Right ventricle myocardium superior (tissue), 1 donor: ENCODE measurements at regions of chr10 and their contacts with region 1.

Region 1: DNA sequence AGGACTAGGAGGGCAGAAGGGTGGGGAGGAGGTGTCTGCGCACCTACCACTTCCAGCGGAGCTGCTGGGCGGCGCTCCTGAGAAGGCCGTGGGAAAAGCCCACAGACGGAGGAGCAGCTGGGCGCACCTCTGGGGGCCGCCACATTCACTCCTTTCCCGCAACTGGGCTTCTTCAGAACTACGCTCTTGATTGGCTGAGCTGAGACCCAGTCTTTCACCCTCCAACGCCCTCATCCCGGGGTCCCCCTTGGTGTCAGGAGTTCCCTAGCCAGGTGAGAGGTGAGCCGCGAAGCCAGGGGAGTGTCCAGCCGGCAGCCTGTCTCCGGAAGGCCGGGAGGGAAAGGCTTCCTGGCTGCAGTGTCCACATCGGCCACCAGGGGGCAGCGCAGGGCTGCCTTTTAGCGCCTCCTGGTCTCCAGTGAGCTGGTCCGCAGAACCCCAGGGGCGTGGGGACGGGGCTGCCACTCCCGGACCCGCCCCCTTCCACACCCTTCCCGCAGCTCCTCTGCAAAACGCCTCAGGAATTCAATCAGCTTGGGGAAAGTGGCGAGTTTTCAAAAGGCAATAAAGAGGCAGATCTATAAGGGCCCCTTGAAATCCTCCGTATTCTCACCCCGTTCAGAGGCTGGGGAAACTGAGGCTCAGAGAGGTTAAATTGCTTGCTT is 98.8 kb downstream of the CHST15 start:
- DNase-seq: peak; percentile 92
- ATAC-seq: peak; percentile 93

Region 2: DNA sequence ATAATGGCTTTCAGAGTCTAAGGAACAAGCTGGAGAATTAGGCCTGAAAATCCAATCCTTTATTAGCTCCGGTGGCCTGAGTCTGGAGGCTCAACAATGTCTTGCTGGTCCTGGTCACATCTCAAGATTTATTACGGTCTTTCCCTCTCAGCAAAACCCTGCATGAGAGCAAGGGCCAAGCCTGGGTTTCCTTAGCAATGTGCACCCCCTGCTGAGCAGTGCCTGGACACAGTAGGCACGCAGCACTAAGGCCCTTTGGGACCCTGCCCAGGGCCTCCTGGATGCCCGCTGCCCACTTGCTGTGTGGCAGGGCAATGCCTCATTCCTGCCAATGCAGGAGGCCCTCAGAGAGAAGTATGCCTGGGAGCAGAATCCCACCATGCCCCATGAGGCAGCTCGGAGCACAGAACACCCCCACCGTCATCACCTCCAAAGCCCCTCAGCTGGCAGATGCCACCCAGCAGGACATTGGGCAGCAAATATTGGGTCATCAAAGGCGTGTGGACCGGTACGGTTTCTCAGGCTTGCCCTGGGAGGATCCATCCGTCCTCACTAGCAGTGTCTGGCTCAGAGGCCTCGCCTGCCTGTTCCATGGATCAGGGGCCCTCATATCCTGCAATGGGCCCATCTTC is 267.8 kb after region 1 on chr10:
- intact Hi-C with region 1: loop called (anchors 5 kb)
- DNase-seq: no peak
- ATAC-seq: peak; percentile 34

Region 3: DNA sequence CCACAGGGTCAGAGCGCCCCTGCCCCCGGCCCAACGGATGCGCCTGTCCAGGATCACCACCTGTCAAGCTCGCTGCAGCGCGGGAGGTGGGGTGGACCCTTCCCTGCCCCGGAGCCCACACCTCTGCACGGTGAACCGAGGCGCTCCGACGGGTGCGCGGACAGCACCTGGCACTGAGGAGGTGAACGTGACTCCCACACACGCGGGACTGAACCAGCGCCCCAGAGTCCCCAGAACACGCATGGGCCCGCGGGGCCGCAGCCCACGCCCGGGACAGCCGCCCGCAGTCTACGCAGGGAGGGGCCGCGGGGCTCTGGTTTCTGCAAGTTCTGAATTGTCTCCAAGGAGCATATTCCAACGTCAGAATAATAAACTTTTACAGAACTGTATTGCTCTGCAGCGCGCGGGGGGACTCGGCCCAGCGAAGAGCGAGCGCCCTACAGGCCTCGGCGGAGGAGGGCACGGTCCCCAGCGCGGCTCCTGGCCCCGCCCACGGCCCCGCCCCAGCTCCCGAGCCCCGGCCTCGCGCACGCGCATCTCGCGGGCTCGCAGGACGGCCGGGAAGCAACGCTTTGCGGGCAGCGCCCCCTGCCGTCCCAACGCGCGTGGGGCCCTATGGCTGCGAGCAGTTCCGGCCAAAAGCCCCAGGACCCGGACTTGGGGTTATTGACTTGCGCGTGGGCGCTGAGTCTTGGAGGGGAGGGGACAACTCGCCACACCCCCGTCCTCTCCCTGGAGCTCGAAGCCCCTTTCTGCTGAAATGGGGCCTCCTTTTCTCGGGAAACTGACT is 394.5 kb after region 1 on chr10:
- intact Hi-C with region 1: loop called (anchors 2 kb)
- DNase-seq: peak; percentile 94
- ATAC-seq: peak; percentile 100